Panc1 (cell line): ENCODE measurements at regions of chr9 and their contacts with region 1.

Region 1: GRCh38 chr9:32550562-32551433 is 1.3 kb upstream of the SMIM27 start:
- DNase-seq: peak; percentile 52
- ATAC-seq: peak; percentile 82
- H3K4me3 ChIP-seq: peak overlapping the region; percentile 54 to 78
- H3K27ac ChIP-seq: peak overlapping the region; percentile 84
- H3K4me1 ChIP-seq: peaks cover 16% of the 10 kb centered on the region
- H3K27me3 ChIP-seq: no peaks in the 10 kb centered on the region
- CTCF ChIP-seq: no peak

Region 2: DNA sequence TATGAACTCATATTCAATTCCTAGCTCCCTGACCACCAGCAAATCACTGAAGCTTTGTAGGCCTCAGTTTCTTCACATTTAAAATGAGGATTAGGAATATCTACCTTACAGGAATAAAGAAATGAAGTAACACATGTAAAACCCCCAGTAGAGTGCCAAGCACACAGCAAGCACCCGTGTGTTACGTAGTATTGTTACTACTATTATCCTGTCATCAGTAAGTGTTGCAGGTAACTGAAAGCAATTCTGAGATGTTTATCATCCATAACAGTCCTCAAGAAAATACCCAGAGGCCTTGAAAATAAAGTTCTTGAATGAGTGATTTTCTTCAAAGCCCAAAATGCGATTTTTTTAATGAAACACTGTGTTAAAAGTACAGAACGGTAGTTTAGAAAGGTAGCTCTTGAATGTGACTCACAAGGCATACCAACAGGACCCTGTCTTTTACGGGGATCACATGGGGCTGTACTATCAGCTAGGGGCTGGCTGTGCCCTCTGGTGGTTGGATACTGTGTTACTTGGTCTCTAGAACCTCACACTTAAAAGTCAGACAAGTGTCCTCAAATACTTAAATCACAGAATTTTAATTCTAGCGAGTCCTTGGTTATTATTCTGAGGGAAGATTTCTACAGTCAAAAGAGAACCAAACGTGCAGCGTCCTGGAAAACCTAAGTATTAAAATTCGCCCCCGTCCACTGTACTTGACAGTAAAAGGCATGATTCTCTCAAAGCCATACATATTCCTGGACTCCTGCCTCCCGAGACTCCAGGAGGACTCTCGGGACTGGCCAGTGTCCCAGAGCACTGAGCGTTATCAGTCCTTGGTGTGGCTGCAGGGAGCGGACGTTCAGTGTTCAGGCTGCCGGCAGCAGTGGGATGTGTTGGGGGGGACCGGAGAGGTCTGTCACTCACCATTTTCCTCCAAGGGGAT is 21.4 kb after region 1 on chr9:
- CTCF ChIA-PET with region 1: interaction called, 4 read pairs
- POLR2A ChIA-PET with region 1: no interaction called
- in situ Hi-C with region 1: no loop called
- intact Hi-C with region 1: loop called (anchors 1 kb)
- DNase-seq: peak; percentile 67
- ATAC-seq: peak; percentile 91
- H3K4me3 ChIP-seq: peak overlapping the region; percentile 95 to 97
- H3K27ac ChIP-seq: peak overlapping the region; percentile 97
- H3K4me1 ChIP-seq: peaks cover 14% of the 10 kb centered on the region; the same call in 1 of the 2 replicates
- H3K27me3 ChIP-seq: no peaks in the 10 kb centered on the region
- CTCF ChIP-seq: peak; percentile 89

Region 3: GRCh38 chr9:32579706-32580331 is 29.0 kb after region 1 on chr9:
- CTCF ChIA-PET with region 1: interaction called, 3 read pairs
- POLR2A ChIA-PET with region 1: interaction called, 12 read pairs
- in situ Hi-C with region 1: no loop called
- intact Hi-C with region 1: no loop called
- DNase-seq: no peak
- ATAC-seq: peak; percentile 59; the same call in 1 of the 2 replicates
- H3K4me3 ChIP-seq: no peak overlapping the region
- H3K27ac ChIP-seq: no peak overlapping the region
- H3K4me1 ChIP-seq: no peaks in the 10 kb centered on the region
- H3K27me3 ChIP-seq: peaks cover 2% of the 10 kb centered on the region; the same call in 1 of the 2 replicates
- CTCF ChIP-seq: peak; percentile 93

Region 4: GRCh38 chr9:33393581-33393980 is 842.8 kb after region 1 on chr9:
- CTCF ChIA-PET with region 1: no interaction called
- POLR2A ChIA-PET with region 1: interaction called, 14 read pairs
- in situ Hi-C with region 1: no loop called
- intact Hi-C with region 1: no loop called
- DNase-seq: no peak
- ATAC-seq: no peak
- H3K4me3 ChIP-seq: no peak overlapping the region
- H3K27ac ChIP-seq: no peak overlapping the region
- H3K4me1 ChIP-seq: peaks cover 7% of the 10 kb centered on the region
- H3K27me3 ChIP-seq: no peaks in the 10 kb centered on the region
- CTCF ChIP-seq: no peak